Sciatic nerve (tissue), 2 donors: ENCODE measurements at regions of chr16 and their contacts with region 1.

Region 1: GRCh38 chr16:74852500-74852875 is 77.9 kb upstream of the FA2H start:
- DNase-seq: no peak
- ATAC-seq: no peak

Region 2: GRCh38 chr16:74718741-74719610 is 133.5 kb before region 1 on chr16:
- intact Hi-C with region 1: loop called (anchors 10 kb)
- DNase-seq: no peak
- ATAC-seq: no peak